Caco-2 (cell line): ENCODE measurements at regions of chr3 and their contacts with region 1.

Region 1: GRCh38 chr3:197466586-197467399 is 89.0 kb downstream of the BDH1 start:
- DNase-seq: no peak
- H3K4me3 ChIP-seq: no peak overlapping the region
- H3K4me3 Mint-ChIP-seq: no peak overlapping the region
- H3K27ac Mint-ChIP-seq: no peak overlapping the region
- H3K4me1 ChIP-seq: peaks cover 51% of the 10 kb centered on the region
- H3K4me1 Mint-ChIP-seq: peaks cover 45% of the 10 kb centered on the region
- H3K27me3 ChIP-seq: no peaks in the 10 kb centered on the region
- H3K27me3 Mint-ChIP-seq: no peaks in the 10 kb centered on the region
- CTCF ChIP-seq: no peak

Region 2: DNA sequence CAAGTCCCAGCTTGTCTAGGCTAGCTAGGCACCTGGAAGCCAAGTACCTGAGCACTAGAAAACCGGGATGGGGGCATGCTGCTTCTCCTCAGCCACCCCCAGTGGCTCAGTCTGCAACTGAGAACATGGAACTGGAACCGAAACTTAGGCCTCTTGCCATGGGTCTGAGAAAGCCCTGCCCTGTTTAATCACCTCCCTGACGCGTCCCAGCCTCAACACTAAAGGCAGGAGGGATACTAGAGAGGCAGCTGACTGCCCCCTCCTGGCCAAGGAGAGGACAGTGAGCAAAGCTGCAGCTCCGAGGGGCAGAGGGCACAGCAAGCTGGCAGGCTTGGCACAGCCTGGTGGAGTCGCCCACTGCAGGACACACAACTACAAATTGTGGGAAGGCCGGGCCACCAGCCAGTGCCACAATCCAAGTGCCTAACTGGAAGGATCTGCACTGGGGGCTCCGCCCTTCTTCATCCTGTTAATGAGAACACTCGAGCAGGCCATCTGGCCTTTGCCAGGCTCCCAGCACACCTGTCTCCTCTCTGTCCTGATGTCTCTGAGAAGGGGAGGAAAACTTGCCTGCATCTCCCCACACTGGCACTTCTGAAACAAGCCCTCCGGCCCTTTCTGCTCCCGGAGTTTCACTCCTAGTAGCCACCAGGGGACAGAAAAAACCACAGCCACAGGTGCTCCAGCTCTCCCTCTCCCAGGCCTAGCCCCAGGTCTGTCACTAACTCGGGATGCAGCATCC is 35.3 kb after region 1 on chr3:
- CTCF ChIA-PET with region 1: no interaction called
- POLR2A ChIA-PET with region 1: no interaction called
- intact Hi-C with region 1: loop called (anchors 5 kb)
- DNase-seq: peak in 1 of 2 experiments; percentile 37
- H3K4me3 ChIP-seq: no peak overlapping the region
- H3K4me3 Mint-ChIP-seq: no peak overlapping the region
- H3K27ac Mint-ChIP-seq: peak overlapping the region; percentile 74
- H3K4me1 ChIP-seq: peaks cover 29% of the 10 kb centered on the region
- H3K4me1 Mint-ChIP-seq: peaks cover 17% of the 10 kb centered on the region
- H3K27me3 ChIP-seq: no peaks in the 10 kb centered on the region
- H3K27me3 Mint-ChIP-seq: no peaks in the 10 kb centered on the region
- CTCF ChIP-seq: peak; percentile 29 to 35